Naive thymus-derived CD4-positive, alpha-beta T cell (primary cell): ENCODE measurements at regions of chr22 and their contacts with region 1.

Region 1: DNA sequence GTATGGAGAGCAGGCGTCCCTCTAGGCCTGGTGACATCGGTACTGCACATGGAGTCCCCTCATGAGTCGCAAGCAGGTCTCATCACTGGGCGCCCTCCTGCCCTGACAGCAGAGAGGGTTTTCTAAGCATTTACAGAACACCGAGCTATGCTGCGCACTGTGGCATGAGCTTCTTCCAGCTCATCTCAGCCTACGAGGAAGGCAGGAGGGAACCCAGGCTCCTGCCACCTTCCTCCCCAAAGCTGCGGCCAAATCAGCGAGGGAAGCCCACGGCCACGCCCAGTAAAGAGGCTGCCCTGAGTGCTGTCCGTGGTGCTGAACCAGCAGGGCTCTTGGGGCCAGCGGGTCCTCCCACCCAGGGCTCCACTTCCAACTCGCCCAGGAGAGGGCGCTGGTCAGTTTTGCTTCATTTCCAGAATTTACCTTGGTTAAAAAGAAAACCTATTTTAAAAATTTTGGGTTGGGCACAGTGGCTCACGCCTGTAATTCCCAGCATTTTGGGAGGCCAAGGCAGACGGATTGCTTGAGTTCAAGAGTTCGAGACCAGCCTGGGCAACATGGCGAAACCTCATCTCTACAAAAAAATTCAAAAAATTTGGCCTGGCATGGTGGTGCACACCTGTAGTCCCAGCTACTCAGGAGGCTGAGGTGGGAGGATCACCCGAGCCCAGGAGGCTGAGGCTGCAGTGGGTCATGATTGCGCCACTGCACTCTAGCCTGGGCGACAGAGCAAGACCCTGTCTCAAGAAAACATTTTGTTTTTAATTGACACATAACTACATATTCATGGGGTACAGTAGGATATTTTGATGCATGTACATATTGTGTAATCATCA is 34.2 kb downstream of the PHF21B start:
- DNase-seq: peak in 8 of 9 donors; percentile 10 to 82 (median 24)
- ATAC-seq: peak; percentile 84
- H3K4me3 ChIP-seq: no peak overlapping the region
- H3K4me3 Mint-ChIP-seq: no peak overlapping the region
- H3K27ac ChIP-seq: no peak overlapping the region
- H3K27ac Mint-ChIP-seq: no peak overlapping the region
- H3K4me1 ChIP-seq: no peaks in the 10 kb centered on the region
- H3K4me1 Mint-ChIP-seq: no peaks in the 10 kb centered on the region
- H3K27me3 ChIP-seq: no peaks in the 10 kb centered on the region
- H3K27me3 Mint-ChIP-seq: peaks cover 0 to 39% (median 24%) of the 10 kb centered on the region in 5 donors

Region 2: GRCh38 chr22:45009881-45010531 is 34.4 kb after region 1 on chr22 and contains the start of gene PHF21B:
- CTCF ChIA-PET with region 1: no interaction called
- POLR2A ChIA-PET with region 1: no interaction called
- intact Hi-C with region 1: no loop called
- DNase-seq: peak in 1 of 9 donors; percentile 48
- ATAC-seq: no peak
- H3K4me3 ChIP-seq: no peak within 1 kb of the TSS
- H3K4me3 Mint-ChIP-seq: peak within 1 kb of the TSS; percentile 71 to 91 (median 82)
- H3K27ac ChIP-seq: no peak within 1 kb of the TSS
- H3K27ac Mint-ChIP-seq: peak within 1 kb of the TSS in 1 of 9 donors; percentile 71
- H3K4me1 ChIP-seq: peaks cover 0 to 10% of the 10 kb centered on the region in 2 donors
- H3K4me1 Mint-ChIP-seq: peaks cover 7 to 18% (median 17%) of the 10 kb centered on the region in 7 donors
- H3K27me3 ChIP-seq: peaks cover 0 to 2% of the 10 kb centered on the region in 2 donors
- H3K27me3 Mint-ChIP-seq: peaks cover 43 to 61% (median 56%) of the 10 kb centered on the region in 5 donors
- total RNA-seq, gene PHF21B: not detected

Region 3: DNA sequence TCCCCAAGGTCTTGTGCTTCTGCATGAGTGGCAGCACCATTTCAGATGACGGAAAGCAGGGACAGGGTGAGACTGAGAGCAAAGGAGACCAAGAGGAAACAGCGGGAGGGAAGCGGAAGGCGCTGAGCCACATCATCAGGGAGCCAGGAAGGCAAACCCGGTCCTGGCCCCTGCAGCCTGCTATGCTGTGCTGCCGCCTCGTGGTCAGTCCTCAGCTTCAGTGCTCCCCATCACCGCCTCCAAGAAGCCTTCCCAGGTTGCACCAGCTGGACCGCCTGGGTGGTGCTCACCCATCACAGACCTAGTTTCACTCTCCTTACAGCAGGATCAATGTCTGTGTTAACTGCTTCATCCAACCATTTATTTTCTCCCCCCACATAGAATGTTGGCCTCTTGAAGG is 107.2 kb after region 1 on chr22:
- CTCF ChIA-PET with region 1: no interaction called
- POLR2A ChIA-PET with region 1: no interaction called
- intact Hi-C with region 1: loop called in 1 of 2 experiments (anchors 10 kb)
- DNase-seq: no peak
- ATAC-seq: no peak
- H3K4me3 ChIP-seq: no peak overlapping the region
- H3K4me3 Mint-ChIP-seq: no peak overlapping the region
- H3K27ac ChIP-seq: no peak overlapping the region
- H3K27ac Mint-ChIP-seq: no peak overlapping the region
- H3K4me1 ChIP-seq: no peaks in the 10 kb centered on the region
- H3K4me1 Mint-ChIP-seq: peaks cover 0 to 4% (median 0%) of the 10 kb centered on the region in 7 donors
- H3K27me3 ChIP-seq: no peaks in the 10 kb centered on the region
- H3K27me3 Mint-ChIP-seq: peaks cover 2 to 45% (median 29%) of the 10 kb centered on the region in 5 donors